Activated CD4-positive, alpha-beta memory T cell treated with anti-CD3 and anti-CD28 coated beads, Interleukin-2, amount 10 ng/mL, durations not matched to agents 7 days and 5 days (primary cell): ENCODE measurements at regions of chr2 and their contacts with region 1.

Region 1: GRCh38 chr2:130372055-130372832 is 16.4 kb downstream of the PTPN18 start:
- DNase-seq: peak; percentile 83
- H3K4me3 Mint-ChIP-seq: peak overlapping the region; percentile 87
- H3K27ac Mint-ChIP-seq: peak overlapping the region; percentile 94
- H3K4me1 Mint-ChIP-seq: peaks cover 70% of the 10 kb centered on the region
- H3K27me3 Mint-ChIP-seq: no peaks in the 10 kb centered on the region

Region 2: DNA sequence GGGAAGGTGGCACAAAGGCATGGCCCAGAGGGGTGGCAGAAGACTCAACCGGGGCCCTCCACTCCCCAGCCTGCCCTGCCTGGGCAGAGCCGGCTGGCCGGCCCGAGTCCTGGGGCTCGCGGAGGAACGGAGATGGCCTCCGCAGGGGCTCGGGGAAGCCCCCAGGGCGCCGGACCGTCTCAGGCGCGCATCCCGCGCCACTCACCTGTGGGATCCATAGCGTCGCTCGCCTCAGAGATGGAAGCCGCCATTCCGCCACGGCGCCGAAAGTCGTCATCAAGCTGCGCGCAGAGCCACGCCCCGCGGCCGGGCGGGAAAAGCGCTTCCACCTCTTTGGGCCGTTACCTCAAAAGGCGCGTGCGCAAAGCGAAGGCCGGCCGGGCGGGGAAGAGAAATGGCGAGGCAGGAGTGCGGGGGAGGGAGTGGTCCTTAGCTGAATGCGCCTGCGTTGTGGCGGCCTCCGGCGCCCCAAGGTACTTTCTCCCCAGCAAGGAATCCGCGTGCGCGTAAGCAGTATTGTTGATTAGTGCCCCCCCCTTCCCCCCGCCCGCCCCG is 190.8 kb before region 1 on chr2 and contains the start of gene SMPD4:
- CTCF ChIA-PET with region 1: interaction called, 4 read pairs
- POLR2A ChIA-PET with region 1: interaction called, 10 read pairs
- DNase-seq: peak; percentile 96
- H3K4me3 Mint-ChIP-seq: peak within 1 kb of the TSS; percentile 92
- H3K27ac Mint-ChIP-seq: peak within 1 kb of the TSS; percentile 93
- H3K4me1 Mint-ChIP-seq: peaks cover 44% of the 10 kb centered on the region
- H3K27me3 Mint-ChIP-seq: no peaks in the 10 kb centered on the region
- total RNA-seq, gene SMPD4: 56.5 to 58.2 TPM

Region 3: GRCh38 chr2:130342533-130343275 is 29.5 kb before region 1 on chr2 and contains the start of gene IMP4:
- CTCF ChIA-PET with region 1: interaction called, 29 read pairs
- POLR2A ChIA-PET with region 1: interaction called, 60 read pairs
- DNase-seq: peak; percentile 97
- H3K4me3 Mint-ChIP-seq: peak within 1 kb of the TSS; percentile 99
- H3K27ac Mint-ChIP-seq: peak within 1 kb of the TSS; percentile 96
- H3K4me1 Mint-ChIP-seq: peaks cover 42% of the 10 kb centered on the region
- H3K27me3 Mint-ChIP-seq: no peaks in the 10 kb centered on the region
- total RNA-seq, gene IMP4: 57.7 to 58.9 TPM

Region 4: DNA sequence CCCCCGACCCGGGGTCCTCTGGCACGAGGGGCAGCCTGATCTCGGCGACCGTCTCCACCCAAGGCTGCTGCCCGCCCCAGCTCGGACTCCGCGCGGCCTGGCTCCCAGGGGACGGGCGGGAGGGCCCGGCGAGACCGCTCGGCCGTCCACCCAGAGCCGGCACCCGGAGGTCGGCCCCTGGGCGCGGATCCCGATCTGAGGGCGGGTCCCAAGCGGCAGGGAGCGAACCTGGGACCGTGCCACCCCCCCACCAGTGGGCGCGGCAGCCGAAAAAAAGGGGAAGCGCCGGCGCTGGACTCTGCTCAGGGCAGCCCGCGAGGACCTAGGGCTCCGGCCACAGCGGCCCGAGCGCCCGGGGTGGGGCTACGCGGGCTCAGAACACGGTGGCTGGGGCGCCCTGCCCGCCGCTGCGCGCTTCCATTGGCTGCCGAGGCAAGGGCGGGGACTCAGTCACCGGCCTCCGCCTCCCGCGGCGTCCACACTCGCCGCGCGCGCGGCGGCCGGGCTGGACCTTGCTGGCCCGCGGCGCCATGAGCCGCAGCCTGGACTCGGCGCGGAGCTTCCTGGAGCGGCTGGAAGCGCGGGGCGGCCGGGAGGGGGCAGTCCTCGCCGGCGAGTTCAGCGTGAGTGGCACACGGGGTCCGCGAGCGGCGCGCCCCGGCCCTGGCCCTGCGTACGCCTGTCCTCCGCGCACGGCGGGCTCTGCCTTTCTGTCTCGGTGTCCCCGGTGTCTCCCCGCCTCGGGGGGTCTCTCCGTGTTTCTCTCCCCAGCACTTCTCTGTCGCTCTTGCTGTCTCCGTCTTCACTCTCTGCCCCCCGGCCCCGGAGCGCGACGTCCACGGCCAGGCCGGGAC is 16.4 kb before region 1 on chr2 and contains the start of gene PTPN18:
- CTCF ChIA-PET with region 1: no interaction called
- POLR2A ChIA-PET with region 1: interaction called, 12 read pairs
- DNase-seq: peak; percentile 73
- H3K4me3 Mint-ChIP-seq: peak within 1 kb of the TSS; percentile 72
- H3K27ac Mint-ChIP-seq: no peak within 1 kb of the TSS
- H3K4me1 Mint-ChIP-seq: peaks cover 14% of the 10 kb centered on the region
- H3K27me3 Mint-ChIP-seq: peaks cover 1% of the 10 kb centered on the region
- total RNA-seq, gene PTPN18: 98.0 to 98.6 TPM

Region 5: DNA sequence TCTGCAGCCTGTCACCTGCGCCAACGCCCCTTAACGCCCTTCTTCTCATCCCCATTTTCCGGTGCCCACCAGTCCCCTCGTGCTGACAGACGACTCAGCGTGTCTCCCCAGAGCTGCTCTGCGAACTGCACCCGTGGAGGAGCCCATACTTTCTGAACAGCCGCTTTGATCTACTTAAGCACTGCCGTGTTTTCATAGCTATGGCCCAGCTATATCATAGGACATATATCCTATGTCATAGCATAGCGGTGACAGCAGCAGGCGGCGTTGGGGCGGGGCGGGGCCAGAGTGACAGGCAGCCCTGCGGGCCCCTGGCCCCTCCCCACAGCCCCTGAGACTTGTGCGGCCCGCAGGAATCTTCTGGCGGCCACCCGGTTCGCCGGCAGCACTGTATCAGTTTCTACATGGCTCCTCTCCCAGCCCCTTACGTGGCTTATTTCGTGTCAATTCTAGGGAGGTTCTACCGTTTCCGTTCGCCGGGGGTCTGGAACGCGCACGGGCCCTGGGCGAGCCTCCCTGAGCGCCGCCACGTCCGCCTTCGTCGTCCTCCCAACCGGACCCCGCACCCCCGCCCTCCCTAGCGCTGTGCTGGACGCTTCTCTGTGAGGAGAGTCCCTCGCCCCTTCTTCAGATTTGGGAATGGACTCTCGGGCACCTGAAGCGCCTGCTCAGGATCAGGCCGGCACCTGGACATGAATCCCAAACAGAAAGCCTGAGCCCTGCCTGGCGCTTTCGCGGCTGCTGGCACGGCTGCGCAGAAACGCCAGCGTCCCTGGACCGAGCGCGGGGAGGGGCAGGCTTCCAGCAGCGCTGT is 19.0 kb after region 1 on chr2:
- CTCF ChIA-PET with region 1: interaction called, 9 read pairs
- POLR2A ChIA-PET with region 1: interaction called, 26 read pairs
- DNase-seq: peak; percentile 76
- H3K4me3 Mint-ChIP-seq: peak overlapping the region; percentile 76
- H3K27ac Mint-ChIP-seq: peak overlapping the region; percentile 64
- H3K4me1 Mint-ChIP-seq: peaks cover 20% of the 10 kb centered on the region
- H3K27me3 Mint-ChIP-seq: peaks cover 5% of the 10 kb centered on the region